HCT116 (cell line): ENCODE measurements at regions of chr3 and their contacts with region 1.

Region 1: DNA sequence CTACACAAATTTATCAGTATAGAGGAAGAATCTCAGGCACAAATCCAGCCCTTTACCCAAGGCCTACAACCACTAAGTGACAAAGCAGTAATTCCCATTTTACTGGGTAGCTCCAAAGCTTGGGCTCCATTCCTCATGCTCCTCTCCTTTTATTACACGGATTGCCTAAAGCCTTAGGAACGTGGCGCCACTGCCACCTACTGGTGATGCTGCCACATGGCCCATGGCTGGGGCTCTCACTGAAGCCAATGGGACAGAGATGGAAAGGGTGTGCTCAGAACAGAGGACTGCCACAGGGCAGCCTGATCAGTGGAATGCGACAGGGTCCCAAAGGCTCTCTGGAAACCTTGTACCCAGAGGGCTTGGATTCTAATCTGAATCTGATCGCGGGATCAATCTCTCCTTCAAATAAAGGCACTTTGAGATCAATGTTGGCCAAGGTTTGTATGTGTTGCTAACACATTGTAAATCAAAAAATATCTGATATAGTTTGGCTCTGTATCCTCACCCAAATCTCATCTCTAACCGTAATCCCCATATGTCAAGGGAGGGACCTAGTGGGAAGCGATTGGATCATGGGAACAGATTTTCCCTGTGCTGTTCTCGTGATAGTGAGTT is 33.5 kb upstream of the LYZL4 start:
- DNase-seq: peak; percentile 68
- ATAC-seq: peak; percentile 100
- H3K4me3 ChIP-seq: no peak overlapping the region
- H3K27ac ChIP-seq: no peak overlapping the region
- H3K4me1 ChIP-seq: peaks cover 0 to 8% of the 10 kb centered on the region in 2 experiments; a peak in 1 of 4 replicates
- H3K27me3 ChIP-seq: peaks cover 5% of the 10 kb centered on the region; the same call in 1 of the 2 replicates
- CTCF ChIP-seq: peak; percentile 95 to 99 (median 98)
- POLR2A ChIP-seq: no peak
- RAD21 ChIP-seq: peak; percentile 99

Region 2: GRCh38 chr3:41893977-41894376 is 550.0 kb before region 1 on chr3:
- CTCF ChIA-PET with region 1: no interaction called
- POLR2A ChIA-PET with region 1: no interaction called
- RAD21 ChIA-PET with region 1: no interaction called
- intact Hi-C with region 1: loop called (anchors 10 kb)
- DNase-seq: peak; percentile 51
- ATAC-seq: peak; percentile 58; the same call in 1 of the 2 replicates
- H3K4me3 ChIP-seq: no peak overlapping the region
- H3K27ac ChIP-seq: no peak overlapping the region
- H3K4me1 ChIP-seq: no peaks in the 10 kb centered on the region
- H3K27me3 ChIP-seq: no peaks in the 10 kb centered on the region
- CTCF ChIP-seq: peak; percentile 30 to 72 (median 61)
- POLR2A ChIP-seq: no peak
- RAD21 ChIP-seq: peak; percentile 81

Region 3: DNA sequence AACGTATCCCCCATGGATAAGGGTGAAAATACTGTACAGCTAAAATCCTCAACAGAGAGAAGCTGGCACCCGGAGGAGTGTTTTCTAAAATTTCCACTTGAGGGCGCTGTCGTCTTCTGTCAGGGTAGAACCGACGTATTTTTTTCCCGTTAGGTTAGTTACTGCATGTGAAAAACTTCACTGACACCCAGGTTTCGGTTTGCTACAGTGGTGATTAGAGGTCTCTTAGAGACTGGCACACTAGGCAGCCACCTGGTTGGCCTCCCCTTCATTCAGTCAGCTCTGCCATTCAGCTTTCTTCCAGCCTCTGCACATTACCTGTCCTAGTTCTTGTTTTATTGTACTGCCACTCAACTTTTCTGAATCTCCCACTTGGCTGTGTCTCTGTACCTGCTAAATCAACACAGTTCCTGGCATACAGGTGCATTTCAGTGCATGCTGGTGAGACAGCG is 196.3 kb before region 1 on chr3:
- CTCF ChIA-PET with region 1: interaction called, 94 read pairs
- POLR2A ChIA-PET with region 1: no interaction called
- RAD21 ChIA-PET with region 1: interaction called, 15 to 16 read pairs
- intact Hi-C with region 1: loop called (anchors 1 kb)
- DNase-seq: peak; percentile 60
- ATAC-seq: peak; percentile 88
- H3K4me3 ChIP-seq: no peak overlapping the region
- H3K27ac ChIP-seq: no peak overlapping the region
- H3K4me1 ChIP-seq: peaks cover 0 to 5% of the 10 kb centered on the region in 2 experiments; a peak in 1 of 4 replicates
- H3K27me3 ChIP-seq: peaks cover 8% of the 10 kb centered on the region; the same call in 1 of the 2 replicates
- CTCF ChIP-seq: peak; percentile 63 to 93 (median 88)
- POLR2A ChIP-seq: no peak
- RAD21 ChIP-seq: peak; percentile 95

Region 4: DNA sequence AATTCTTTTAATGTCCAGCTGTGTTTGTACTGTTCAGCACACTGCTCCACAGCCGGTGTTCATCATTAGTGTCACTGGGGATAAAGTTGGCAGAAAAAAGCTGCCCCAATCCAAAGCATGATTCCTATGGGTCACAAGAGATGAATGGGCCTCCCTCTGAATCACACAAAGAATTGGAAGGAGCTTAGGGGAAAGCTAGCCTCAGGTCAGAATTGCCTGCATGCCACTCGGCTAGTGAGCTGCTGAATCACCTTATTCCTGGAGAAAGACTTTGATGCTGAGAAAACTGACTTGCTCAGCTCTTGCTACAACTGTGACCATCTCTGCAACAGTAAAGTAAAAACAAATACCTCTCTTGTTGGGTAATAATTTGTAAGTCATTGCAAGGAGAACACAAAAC is 181.4 kb before region 1 on chr3:
- CTCF ChIA-PET with region 1: interaction called, 12 read pairs
- POLR2A ChIA-PET with region 1: no interaction called
- RAD21 ChIA-PET with region 1: no interaction called
- intact Hi-C with region 1: no loop called
- DNase-seq: peak; percentile 13
- ATAC-seq: peak; percentile 46
- H3K4me3 ChIP-seq: 0 out of 4 replicates have a peak overlapping the region, but pooled peaks of 1 of the 2 experiments have one; percentile 53
- H3K27ac ChIP-seq: no peak overlapping the region
- H3K4me1 ChIP-seq: peaks cover 6 to 27% of the 10 kb centered on the region in 2 experiments; a peak in 3 of 4 replicates
- H3K27me3 ChIP-seq: no peaks in the 10 kb centered on the region
- CTCF ChIP-seq: no peak
- POLR2A ChIP-seq: no peak
- RAD21 ChIP-seq: no peak

Region 5: DNA sequence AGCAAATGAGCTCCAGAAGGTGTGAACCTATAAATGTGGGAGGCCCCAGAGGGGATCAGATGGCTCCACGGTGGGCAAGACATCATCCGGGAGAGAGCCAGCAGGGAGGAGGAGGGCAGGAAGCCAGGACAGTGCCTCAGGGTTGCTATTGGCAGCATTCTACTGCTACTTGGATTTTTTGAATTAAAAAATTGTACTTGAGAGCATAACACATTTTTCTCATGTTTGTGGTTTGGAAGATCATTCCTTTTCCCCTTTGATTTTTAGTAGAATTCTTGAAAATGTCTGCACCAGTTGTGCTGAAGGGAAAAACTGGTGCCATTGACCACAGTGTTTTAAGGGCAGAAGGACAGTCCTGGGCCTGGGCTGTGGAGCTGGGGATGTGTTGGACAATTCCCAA is 92.7 kb before region 1 on chr3:
- CTCF ChIA-PET with region 1: no interaction called
- POLR2A ChIA-PET with region 1: no interaction called
- RAD21 ChIA-PET with region 1: no interaction called
- intact Hi-C with region 1: no loop called
- DNase-seq: no peak
- ATAC-seq: no peak
- H3K4me3 ChIP-seq: no peak overlapping the region
- H3K27ac ChIP-seq: no peak overlapping the region
- H3K4me1 ChIP-seq: no peaks in the 10 kb centered on the region
- H3K27me3 ChIP-seq: no peaks in the 10 kb centered on the region
- CTCF ChIP-seq: no peak
- POLR2A ChIP-seq: no peak
- RAD21 ChIP-seq: no peak

Region 6: GRCh38 chr3:42839616-42840015 is 395.7 kb after region 1 on chr3:
- CTCF ChIA-PET with region 1: no interaction called
- POLR2A ChIA-PET with region 1: no interaction called
- RAD21 ChIA-PET with region 1: no interaction called
- intact Hi-C with region 1: loop called (anchors 10 kb)
- DNase-seq: peak; percentile 63
- ATAC-seq: peak; percentile 99
- H3K4me3 ChIP-seq: no peak overlapping the region
- H3K27ac ChIP-seq: no peak overlapping the region
- H3K4me1 ChIP-seq: no peaks in the 10 kb centered on the region
- H3K27me3 ChIP-seq: no peaks in the 10 kb centered on the region
- CTCF ChIP-seq: peak; percentile 55 to 75 (median 69); a peak in 5 of 6 replicates
- POLR2A ChIP-seq: no peak
- RAD21 ChIP-seq: peak; percentile 74